Posterior cingulate gyrus (tissue), 11 donors: ENCODE measurements at regions of chr10 and their contacts with region 1.

Region 1: GRCh38 chr10:38010119-38010903 is at the start of gene ZNF33A:
- DNase-seq: peak; percentile 80 to 98 (median 92)

Region 2: GRCh38 chr10:37789590-37789989 is 220.7 kb before region 1 on chr10:
- intact Hi-C with region 1: no loop called
- DNase-seq: no peak

Region 3: GRCh38 chr10:37937864-37938263 is 72.4 kb before region 1 on chr10:
- intact Hi-C with region 1: no loop called
- DNase-seq: no peak

Region 4: DNA sequence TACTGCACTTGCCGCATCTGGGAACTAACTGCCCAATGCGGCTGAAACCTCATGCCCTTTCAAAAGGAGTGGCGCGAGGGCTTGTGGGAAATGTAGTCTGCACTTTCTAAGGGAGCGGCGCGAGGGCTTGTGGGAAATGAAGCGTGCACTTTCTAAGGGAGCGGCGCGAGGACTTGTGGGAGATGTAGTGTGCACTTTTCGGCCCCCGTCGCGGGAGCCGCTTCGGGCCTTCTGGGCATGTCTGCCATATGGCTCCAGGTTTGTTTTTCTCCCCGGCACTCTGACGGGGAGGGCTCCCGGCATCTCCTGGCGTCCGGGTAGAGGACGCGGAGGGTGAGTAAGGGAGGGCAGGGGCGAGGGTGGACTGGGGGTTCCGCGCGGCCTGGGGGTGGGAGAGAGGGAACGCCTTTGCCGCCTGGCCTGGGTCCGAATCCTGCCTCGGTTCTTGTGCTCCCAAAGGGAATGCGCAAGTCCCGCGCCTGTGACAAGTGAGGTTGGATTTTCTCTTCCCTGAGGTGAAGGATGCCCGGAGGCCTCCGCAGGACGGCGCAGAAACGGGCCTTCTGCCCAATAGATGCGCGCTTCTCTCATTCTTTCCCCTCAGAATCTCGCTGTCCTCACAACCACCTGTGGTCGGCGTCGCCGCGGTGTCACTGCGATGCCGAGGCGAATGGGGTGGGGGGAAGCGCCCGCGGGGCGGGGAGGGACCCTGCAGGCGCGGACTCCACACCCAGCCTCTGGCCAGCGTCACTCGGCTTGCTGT is 84.0 kb after region 1 on chr10 and contains the start of gene ZNF37A:
- intact Hi-C with region 1: loop called (anchors 1 kb)
- DNase-seq: peak; percentile 89 to 99 (median 96)

Region 5: GRCh38 chr10:38143587-38143986 is 133.3 kb after region 1 on chr10:
- intact Hi-C with region 1: no loop called
- DNase-seq: no peak